ENCODE measurements at regions of chr6 and their contacts with region 1.

Region 1: DNA sequence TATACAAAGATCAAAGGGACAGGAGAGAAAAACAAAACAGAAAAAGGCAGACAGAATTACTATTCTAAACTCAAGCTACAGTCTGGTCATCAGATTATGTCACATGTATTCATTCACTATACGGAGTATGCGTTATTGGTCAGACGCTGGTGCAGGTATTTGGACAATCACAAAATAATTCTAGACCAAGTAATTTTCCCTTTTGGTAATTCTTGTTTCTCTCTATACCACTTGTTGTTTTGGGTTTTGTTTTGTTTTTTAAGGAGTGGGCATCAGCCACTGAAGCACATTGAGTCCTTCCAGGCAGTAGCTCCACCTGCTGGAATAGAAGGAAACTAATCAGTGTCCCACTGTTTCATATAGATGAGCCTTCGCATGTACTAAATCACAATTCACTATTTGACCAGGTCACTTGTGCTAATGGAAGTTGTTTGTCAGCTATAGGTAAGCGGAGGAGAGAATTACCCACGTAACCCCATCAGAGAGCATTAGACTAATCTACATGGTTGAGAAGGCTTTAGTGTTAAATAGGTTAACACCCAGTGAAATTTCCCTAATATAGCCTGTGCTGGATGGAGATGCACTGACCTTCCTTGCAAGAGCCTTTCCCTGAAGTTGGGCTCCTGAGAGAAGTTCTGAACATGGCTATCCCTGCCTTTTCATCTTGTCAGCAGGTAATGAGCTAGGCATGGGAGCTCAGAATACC is 77.9 kb downstream of the TNFAIP3 start:
- DNase-seq: no peak
- H3K4me3 ChIP-seq: no peak overlapping the region
- H3K27ac ChIP-seq: no peak overlapping the region
- H3K4me1 ChIP-seq: no peaks in the 10 kb centered on the region
- H3K27me3 ChIP-seq: no peaks in the 10 kb centered on the region
- CTCF ChIP-seq: peak; percentile 68 to 70

Region 2: GRCh38 chr6:137892271-137892708 is 52.7 kb before region 1 on chr6:
- intact Hi-C with region 1: loop called (anchors 10 kb)
- DNase-seq: no peak
- H3K4me3 ChIP-seq: no peak overlapping the region
- H3K27ac ChIP-seq: no peak overlapping the region
- H3K4me1 ChIP-seq: no peaks in the 10 kb centered on the region
- H3K27me3 ChIP-seq: no peaks in the 10 kb centered on the region
- CTCF ChIP-seq: no peak

Measured in tibial artery (tissue), 4 donors.